PC-9 (cell line): ENCODE measurements at regions of chr7 and their contacts with region 1.

Region 1: DNA sequence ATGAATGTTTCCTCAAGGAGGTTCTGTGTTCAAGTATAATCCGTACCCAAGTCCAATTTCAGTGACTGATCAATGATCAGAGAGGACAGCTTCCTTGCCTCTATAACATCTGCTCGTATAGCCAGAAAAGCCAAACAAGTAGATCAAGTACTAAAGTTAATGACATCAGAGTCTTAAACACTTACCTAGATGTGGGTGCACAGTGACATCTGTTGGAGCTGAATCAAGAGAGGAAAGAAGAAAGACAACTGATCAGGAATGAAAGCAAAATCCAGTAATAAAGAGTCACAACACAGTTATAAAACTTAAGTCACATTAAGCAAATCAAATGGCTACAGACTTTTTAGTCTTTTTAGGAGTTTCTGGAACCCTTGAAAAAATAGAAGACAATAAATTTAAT is 236.5 kb downstream of the RELN start:
- DNase-seq: peak in 1 of 2 experiments; percentile 14
- H3K4me3 ChIP-seq: no peak overlapping the region
- H3K27ac ChIP-seq: no peak overlapping the region
- H3K4me1 ChIP-seq: no peaks in the 10 kb centered on the region
- H3K27me3 ChIP-seq: no peaks in the 10 kb centered on the region
- CTCF ChIP-seq: peak; percentile 57

Region 2: GRCh38 chr7:103447073-103447951 is 305.7 kb before region 1 on chr7:
- CTCF ChIA-PET with region 1: no interaction called
- POLR2A ChIA-PET with region 1: no interaction called
- intact Hi-C with region 1: loop called (anchors 2 kb)
- DNase-seq: peak in 1 of 2 experiments; percentile 46
- H3K4me3 ChIP-seq: no peak overlapping the region
- H3K27ac ChIP-seq: no peak overlapping the region
- H3K4me1 ChIP-seq: no peaks in the 10 kb centered on the region
- H3K27me3 ChIP-seq: peaks cover 61% of the 10 kb centered on the region
- CTCF ChIP-seq: peak; percentile 71

Region 3: GRCh38 chr7:103524042-103524907 is 228.7 kb before region 1 on chr7:
- CTCF ChIA-PET with region 1: no interaction called
- POLR2A ChIA-PET with region 1: no interaction called
- intact Hi-C with region 1: loop called (anchors 1 kb)
- DNase-seq: no peak
- H3K4me3 ChIP-seq: no peak overlapping the region
- H3K27ac ChIP-seq: no peak overlapping the region
- H3K4me1 ChIP-seq: no peaks in the 10 kb centered on the region
- H3K27me3 ChIP-seq: peaks cover 13% of the 10 kb centered on the region
- CTCF ChIP-seq: peak; percentile 52

Region 4: DNA sequence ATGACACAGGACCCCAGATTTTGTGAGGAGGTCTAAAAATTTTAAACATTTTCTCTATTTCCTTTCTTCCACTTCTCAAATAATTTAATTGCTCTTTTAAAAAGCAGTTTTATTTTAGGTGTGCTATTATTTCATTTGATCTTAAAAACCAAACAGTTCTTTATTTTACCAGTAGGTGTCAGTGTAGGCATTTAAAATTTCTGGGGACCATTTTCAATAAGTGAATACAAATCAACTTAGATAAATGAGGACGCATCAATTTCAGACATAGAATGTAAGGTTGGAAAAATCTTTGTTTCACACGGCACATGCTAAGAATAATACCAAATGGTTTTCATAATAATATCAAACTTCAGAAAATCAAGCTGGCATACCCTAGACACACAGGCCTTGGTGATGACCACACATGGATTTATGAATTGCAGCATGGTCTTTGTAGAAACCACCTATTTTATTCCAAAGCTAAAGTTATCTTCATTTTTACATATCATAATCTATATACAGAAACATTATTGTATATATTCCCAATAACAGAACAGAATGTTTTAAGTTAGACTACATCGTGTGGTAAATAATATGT is 179.4 kb before region 1 on chr7:
- CTCF ChIA-PET with region 1: no interaction called
- POLR2A ChIA-PET with region 1: interaction called, 7 read pairs
- intact Hi-C with region 1: loop called (anchors 1 kb)
- DNase-seq: peak in 1 of 2 experiments; percentile 38
- H3K4me3 ChIP-seq: no peak overlapping the region
- H3K27ac ChIP-seq: no peak overlapping the region
- H3K4me1 ChIP-seq: no peaks in the 10 kb centered on the region
- H3K27me3 ChIP-seq: 0 out of 2 replicates have a peak, but pooled peaks cover 5% of the 10 kb centered on the region
- CTCF ChIP-seq: peak; percentile 83

Region 5: DNA sequence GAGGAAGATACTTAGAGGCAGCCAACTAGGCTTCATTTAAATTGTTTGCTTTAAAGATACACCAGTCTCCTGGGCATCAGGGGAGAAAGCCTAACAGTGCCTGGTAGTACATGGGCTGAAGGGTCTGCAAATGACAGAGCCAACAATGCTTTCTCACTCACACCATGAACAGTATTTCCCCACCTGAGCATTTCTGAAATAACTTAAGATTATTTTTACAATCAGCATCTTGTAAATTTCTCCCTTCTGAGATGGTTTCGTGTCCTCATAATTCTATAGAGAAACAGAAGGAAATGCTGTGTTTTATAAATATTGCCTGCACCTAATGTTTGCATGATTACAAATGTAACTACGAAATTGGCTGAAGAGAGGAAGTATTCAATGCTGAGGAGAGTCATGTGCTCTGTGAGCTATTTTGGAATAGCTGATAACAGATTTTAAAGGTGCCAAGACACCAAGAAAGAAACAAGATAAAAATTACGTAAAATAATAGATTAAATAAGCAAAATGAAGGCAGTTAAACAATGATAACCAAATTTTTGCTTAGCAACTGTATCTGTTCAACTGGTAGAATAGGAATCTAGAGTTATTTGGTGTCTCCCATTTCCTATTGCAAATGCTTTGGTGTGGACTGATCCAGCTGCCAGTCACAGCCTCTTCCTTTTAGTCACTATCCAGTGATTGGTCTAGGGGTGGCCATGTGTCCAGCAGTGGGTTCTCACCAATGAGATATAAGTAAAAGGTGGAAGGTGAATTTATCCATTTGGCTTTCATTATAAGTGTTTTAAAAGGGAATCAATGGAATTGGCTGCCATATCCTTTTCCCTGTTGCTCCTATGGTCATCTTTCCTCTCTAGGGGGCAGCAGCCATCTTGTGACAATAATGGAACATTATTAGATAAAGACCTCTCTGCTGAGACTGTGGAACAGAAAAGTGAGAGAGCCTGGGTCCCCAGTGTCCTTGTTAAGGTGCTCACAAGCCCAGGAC is 139.0 kb before region 1 on chr7:
- CTCF ChIA-PET with region 1: no interaction called
- POLR2A ChIA-PET with region 1: no interaction called
- intact Hi-C with region 1: loop called (anchors 2 kb)
- DNase-seq: no peak
- H3K4me3 ChIP-seq: no peak overlapping the region
- H3K27ac ChIP-seq: no peak overlapping the region
- H3K4me1 ChIP-seq: no peaks in the 10 kb centered on the region
- H3K27me3 ChIP-seq: no peaks in the 10 kb centered on the region
- CTCF ChIP-seq: peak; percentile 46

Region 6: DNA sequence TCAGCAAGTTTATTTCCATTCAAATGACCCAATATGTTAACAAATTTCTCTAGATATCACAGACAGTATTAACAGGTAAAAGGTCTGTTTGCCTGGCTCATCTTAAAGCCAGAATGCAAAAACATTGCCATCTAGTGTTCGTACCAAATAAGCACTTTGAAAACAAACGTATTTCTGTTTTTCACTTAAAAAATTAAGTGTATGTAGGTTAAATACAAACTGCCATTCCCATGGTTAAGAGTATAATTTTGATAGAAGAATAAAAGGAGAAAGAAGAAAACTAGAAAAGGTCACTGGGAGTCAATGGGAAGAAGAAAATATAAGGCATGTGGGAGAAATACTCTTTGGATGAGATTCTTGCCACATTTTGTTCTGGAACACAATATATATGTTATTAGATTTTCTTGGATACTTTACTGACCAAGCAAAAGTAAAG is 403.9 kb after region 1 on chr7:
- CTCF ChIA-PET with region 1: no interaction called
- POLR2A ChIA-PET with region 1: no interaction called
- intact Hi-C with region 1: loop called (anchors 10 kb)
- DNase-seq: no peak
- H3K4me3 ChIP-seq: no peak overlapping the region
- H3K27ac ChIP-seq: no peak overlapping the region
- H3K4me1 ChIP-seq: no peaks in the 10 kb centered on the region
- H3K27me3 ChIP-seq: no peaks in the 10 kb centered on the region
- CTCF ChIP-seq: peak; percentile 76